Dorsolateral prefrontal cortex (tissue), 120 donors: ENCODE measurements at regions of chr20 and their contacts with region 1.

Region 1: GRCh38 chr20:32908334-32909292 is 49.9 kb downstream of the EFCAB8 start:
- DNase-seq: peak in 1 of 10 donors; percentile 28
- H3K4me3 ChIP-seq: no peak overlapping the region
- H3K27ac ChIP-seq: no peak overlapping the region
- H3K27me3 ChIP-seq: no peaks in the 10 kb centered on the region
- CTCF ChIP-seq: no peak

Region 2: DNA sequence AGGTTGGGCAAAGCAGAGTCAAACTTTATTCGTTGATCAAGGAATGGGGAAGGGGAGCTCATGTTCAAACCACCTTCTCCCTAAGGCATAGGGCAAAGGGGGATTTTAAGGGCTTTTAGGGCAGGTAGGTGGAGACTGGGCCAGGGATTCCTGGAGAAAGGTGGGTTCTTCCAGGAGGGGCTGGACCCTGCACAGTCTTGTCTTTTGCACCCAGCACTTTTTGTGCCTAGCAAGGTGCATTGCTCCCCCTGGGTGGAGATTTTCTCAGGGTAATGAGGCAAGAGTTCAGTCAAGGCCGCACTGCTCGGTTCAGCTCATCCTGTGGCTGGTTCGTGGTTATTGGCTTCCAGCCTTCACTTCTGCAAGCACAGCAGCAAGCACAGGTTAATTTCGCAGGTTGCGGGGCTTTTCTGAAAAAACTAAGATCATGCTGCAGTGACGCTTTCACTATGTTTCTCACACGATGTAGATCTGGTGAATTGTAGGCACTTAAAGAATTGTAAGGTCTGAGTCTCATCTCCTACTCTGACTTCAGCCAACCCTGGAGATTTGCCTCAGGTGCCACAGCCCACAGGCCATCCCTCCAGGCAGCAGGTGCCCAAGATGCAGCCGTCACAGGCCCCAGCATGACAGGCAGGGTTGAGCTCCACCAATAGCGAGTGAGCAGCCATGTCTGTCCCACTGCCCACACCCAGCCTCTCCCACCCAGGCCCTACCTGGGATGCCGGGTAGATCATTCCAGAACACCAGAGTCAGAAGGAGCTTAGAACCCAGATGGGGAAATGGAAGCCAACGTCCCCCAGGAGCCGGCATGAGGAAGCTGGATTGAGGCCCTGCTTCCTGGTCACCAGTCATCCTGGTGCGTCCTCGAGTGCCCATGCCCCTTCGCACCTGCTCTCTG is 58.5 kb after region 1 on chr20:
- intact Hi-C with region 1: loop called in 1 of 2 experiments (anchors 5 kb)
- DNase-seq: peak in 2 of 10 donors; percentile 3 to 36
- H3K4me3 ChIP-seq: no peak overlapping the region
- H3K27ac ChIP-seq: no peak overlapping the region
- H3K27me3 ChIP-seq: peaks cover 0 to 8% (median 0%) of the 10 kb centered on the region in 45 donors
- CTCF ChIP-seq: no peak